ENCODE measurements at regions of chr3 and their contacts with region 1.

Region 1: DNA sequence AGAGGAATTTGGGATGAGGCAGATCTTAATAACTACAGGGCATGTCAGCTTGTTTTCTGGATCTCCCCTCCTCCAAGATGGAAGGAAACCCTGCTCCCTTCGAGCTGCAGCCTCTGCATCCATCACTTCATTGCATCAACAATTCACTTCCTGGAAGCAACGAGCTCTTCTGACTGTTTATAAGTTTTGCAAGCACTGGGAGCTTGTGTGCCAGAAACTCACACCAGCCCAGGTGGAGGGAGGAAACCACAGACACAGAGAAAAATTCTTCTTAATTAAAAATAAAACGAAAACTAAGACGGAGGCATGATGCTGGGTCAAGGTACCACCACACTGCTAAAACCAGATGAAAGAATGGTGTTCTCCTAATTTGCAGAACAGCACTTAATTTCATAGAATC is 10.6 kb downstream of the LRIG1 start:
- DNase-seq: peak; percentile 55
- H3K4me3 Mint-ChIP-seq: peak overlapping the region; percentile 46
- H3K27ac Mint-ChIP-seq: peak overlapping the region; percentile 90
- H3K4me1 Mint-ChIP-seq: peaks cover 93% of the 10 kb centered on the region
- H3K27me3 Mint-ChIP-seq: peaks cover 8% of the 10 kb centered on the region

Region 2: DNA sequence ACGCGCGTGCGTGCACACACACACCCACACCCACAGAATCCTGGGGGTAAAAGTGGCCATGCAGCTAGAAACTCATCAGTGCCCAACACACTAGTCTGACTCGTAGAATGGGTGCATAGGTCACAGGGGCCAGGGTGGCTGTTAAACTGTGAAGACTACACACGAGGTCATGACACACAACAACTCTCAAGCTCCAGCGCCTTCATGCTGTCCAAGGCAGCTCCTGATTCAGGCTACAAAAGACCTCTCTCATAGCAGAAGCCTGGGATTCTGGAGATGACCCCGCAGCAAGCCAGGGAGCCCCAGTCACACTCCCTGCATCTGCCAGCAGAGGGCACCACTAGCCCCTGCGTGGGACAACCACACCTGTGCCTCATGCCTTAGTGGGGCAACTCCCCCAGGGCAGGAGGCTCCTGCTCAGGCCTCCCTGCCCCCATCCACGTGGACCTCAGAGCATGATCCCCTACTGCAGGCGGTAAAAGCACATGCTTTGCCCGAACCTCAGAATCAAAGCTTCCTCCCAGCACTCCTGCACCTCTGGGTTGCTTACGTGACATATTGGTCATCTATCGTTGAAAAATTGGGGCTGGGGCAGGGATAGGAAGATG is 82.5 kb before region 1 on chr3:
- CTCF ChIA-PET with region 1: interaction called, 12 read pairs
- DNase-seq: peak; percentile 83
- H3K4me3 Mint-ChIP-seq: no peak overlapping the region
- H3K27ac Mint-ChIP-seq: no peak overlapping the region
- H3K4me1 Mint-ChIP-seq: no peaks in the 10 kb centered on the region
- H3K27me3 Mint-ChIP-seq: no peaks in the 10 kb centered on the region

Region 3: GRCh38 chr3:66476852-66477381 is 13.3 kb before region 1 on chr3:
- CTCF ChIA-PET with region 1: interaction called, 11 read pairs
- DNase-seq: no peak
- H3K4me3 Mint-ChIP-seq: no peak overlapping the region
- H3K27ac Mint-ChIP-seq: no peak overlapping the region
- H3K4me1 Mint-ChIP-seq: peaks cover 24% of the 10 kb centered on the region
- H3K27me3 Mint-ChIP-seq: no peaks in the 10 kb centered on the region

Region 4: GRCh38 chr3:66520724-66521123 is 30.5 kb after region 1 on chr3:
- CTCF ChIA-PET with region 1: no interaction called
- DNase-seq: no peak
- H3K4me3 Mint-ChIP-seq: no peak overlapping the region
- H3K27ac Mint-ChIP-seq: no peak overlapping the region
- H3K4me1 Mint-ChIP-seq: peaks cover 5% of the 10 kb centered on the region
- H3K27me3 Mint-ChIP-seq: peaks cover 33% of the 10 kb centered on the region

Measured in activated naive CD4-positive, alpha-beta T cell treated with anti-CD3 and anti-CD28 coated beads, Interleukin-2, amount 10 ng/mL, durations not matched to agents 7 days and 5 days (primary cell).